CD4-positive, alpha-beta memory T cell (primary cell): ENCODE measurements at regions of chr11 and their contacts with region 1.

Region 1: GRCh38 chr11:72722050-72722748 is 30.0 kb downstream of the ARAP1 start:
- DNase-seq: peak; percentile 88 to 93 (median 91)
- H3K4me3 ChIP-seq: peak overlapping the region; percentile 82 to 98
- H3K4me3 Mint-ChIP-seq: peak overlapping the region; percentile 93 to 99 (median 96)
- H3K27ac ChIP-seq: peak overlapping the region; percentile 80
- H3K27ac Mint-ChIP-seq: peak overlapping the region; percentile 93 to 98 (median 96)
- H3K4me1 ChIP-seq: peaks cover 54% of the 10 kb centered on the region
- H3K4me1 Mint-ChIP-seq: peaks cover 46 to 78% (median 60%) of the 10 kb centered on the region in 4 donors
- H3K27me3 ChIP-seq: no peaks in the 10 kb centered on the region
- H3K27me3 Mint-ChIP-seq: peaks cover 0 to 1% of the 10 kb centered on the region in 2 donors

Region 2: DNA sequence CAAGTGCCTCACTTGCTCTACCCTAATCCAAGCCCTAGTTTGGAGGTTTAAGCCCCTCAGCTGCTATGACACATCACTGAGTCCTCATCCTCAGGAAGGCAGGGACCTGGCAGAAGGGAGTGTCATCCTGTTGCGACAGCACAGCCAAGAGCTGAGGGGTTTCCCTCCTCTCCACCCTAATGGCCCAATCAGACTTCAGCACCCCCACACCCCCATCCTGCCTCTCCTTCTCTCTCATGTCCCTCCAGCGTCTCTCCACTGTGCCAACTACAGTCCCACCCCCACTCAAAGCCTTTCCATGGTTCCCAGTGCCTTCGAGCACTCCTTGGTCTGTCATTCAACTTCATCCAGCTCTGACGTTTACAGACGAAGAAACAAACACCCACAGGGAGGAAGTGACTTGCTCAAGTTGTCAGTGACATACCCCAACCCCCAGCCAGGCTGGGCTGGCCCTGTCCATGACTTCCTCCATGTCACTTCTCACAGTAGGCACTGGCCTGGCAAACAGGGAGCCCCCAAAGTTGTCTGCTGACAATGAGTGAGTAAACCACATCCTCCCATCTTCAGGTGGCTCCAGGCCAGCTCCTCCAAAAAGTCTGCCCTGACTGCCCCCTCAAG is 14.4 kb after region 1 on chr11:
- CTCF ChIA-PET with region 1: interaction called, 13 read pairs
- POLR2A ChIA-PET with region 1: interaction called, 9 read pairs
- intact Hi-C with region 1: no loop called
- DNase-seq: peak; percentile 71 to 90 (median 78)
- H3K4me3 ChIP-seq: no peak overlapping the region
- H3K4me3 Mint-ChIP-seq: peak overlapping the region; percentile 6 to 74 (median 54)
- H3K27ac ChIP-seq: peak overlapping the region; percentile 54
- H3K27ac Mint-ChIP-seq: peak overlapping the region; percentile 89 to 100 (median 98)
- H3K4me1 ChIP-seq: peaks cover 59% of the 10 kb centered on the region
- H3K4me1 Mint-ChIP-seq: peaks cover 43 to 65% (median 54%) of the 10 kb centered on the region in 4 donors
- H3K27me3 ChIP-seq: no peaks in the 10 kb centered on the region
- H3K27me3 Mint-ChIP-seq: no peaks in the 10 kb centered on the region

Region 3: DNA sequence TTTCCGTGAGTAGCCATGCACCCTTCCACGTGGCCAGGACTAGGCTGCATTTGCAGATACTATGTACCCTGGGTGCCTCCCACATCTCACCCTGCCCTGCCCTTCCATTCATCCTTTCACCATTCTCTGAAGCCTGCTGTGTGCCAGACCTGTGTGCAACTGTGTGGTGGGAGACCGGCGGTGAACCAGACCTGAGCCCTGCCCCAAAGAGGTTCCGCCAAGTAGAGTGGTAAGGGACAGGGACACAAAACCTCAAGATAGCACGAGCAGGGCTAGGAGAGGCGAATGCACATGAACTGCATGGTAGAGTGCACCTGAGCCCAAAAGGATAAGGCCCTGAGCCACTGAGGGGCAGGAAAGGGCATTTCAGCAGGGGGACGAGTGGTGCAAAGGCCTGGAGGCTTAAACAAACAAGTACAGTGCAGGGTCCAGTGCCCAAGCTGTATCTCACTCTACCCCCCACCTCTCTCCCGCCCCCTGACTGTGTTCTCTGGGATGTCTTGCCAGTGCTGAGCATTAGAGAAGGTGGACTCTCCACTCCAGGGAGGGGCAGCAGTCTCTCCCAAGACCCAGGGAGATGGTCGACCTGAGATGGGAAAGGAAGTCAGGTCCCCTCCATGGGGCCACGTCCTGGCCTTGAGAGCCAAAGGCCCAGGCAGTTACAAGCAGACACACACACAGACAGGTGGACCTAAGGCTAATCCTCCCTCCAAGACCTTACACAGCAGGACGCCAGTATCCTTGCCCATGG is 44.1 kb after region 1 on chr11:
- CTCF ChIA-PET with region 1: interaction called, 10 read pairs
- POLR2A ChIA-PET with region 1: interaction called, 3 read pairs
- intact Hi-C with region 1: no loop called
- DNase-seq: no peak
- H3K4me3 ChIP-seq: no peak overlapping the region
- H3K4me3 Mint-ChIP-seq: no peak overlapping the region
- H3K27ac ChIP-seq: no peak overlapping the region
- H3K27ac Mint-ChIP-seq: peak overlapping the region in 2 of 7 donors; percentile 9 to 63
- H3K4me1 ChIP-seq: peaks cover 10% of the 10 kb centered on the region
- H3K4me1 Mint-ChIP-seq: peaks cover 8 to 19% (median 13%) of the 10 kb centered on the region in 4 donors
- H3K27me3 ChIP-seq: no peaks in the 10 kb centered on the region
- H3K27me3 Mint-ChIP-seq: no peaks in the 10 kb centered on the region

Region 4: GRCh38 chr11:72814286-72815109 is 92.3 kb after region 1 on chr11 and contains the start of gene ATG16L2:
- CTCF ChIA-PET with region 1: interaction called, 34 read pairs
- POLR2A ChIA-PET with region 1: interaction called, 46 read pairs
- intact Hi-C with region 1: loop called (anchors 1 kb)
- DNase-seq: peak; percentile 88 to 97 (median 92)
- H3K4me3 ChIP-seq: peak within 1 kb of the TSS; percentile 77 to 99
- H3K4me3 Mint-ChIP-seq: peak within 1 kb of the TSS; percentile 98 to 100 (median 98)
- H3K27ac ChIP-seq: peak within 1 kb of the TSS; percentile 97
- H3K27ac Mint-ChIP-seq: peak within 1 kb of the TSS; percentile 98 to 100 (median 99)
- H3K4me1 ChIP-seq: peaks cover 31% of the 10 kb centered on the region
- H3K4me1 Mint-ChIP-seq: peaks cover 31 to 67% (median 49%) of the 10 kb centered on the region in 4 donors
- H3K27me3 ChIP-seq: no peaks in the 10 kb centered on the region
- H3K27me3 Mint-ChIP-seq: no peaks in the 10 kb centered on the region
- total RNA-seq, gene ATG16L2: 194 to 202 TPM

Region 5: GRCh38 chr11:72848846-72849466 is 126.8 kb after region 1 on chr11:
- CTCF ChIA-PET with region 1: interaction called, 14 read pairs
- POLR2A ChIA-PET with region 1: no interaction called
- intact Hi-C with region 1: loop called (anchors 1 kb)
- DNase-seq: peak; percentile 42 to 57 (median 47)
- H3K4me3 ChIP-seq: no peak overlapping the region
- H3K4me3 Mint-ChIP-seq: no peak overlapping the region
- H3K27ac ChIP-seq: no peak overlapping the region
- H3K27ac Mint-ChIP-seq: peak overlapping the region in 2 of 7 donors; percentile 42 to 56
- H3K4me1 ChIP-seq: no peaks in the 10 kb centered on the region
- H3K4me1 Mint-ChIP-seq: peaks cover 7 to 14% (median 11%) of the 10 kb centered on the region in 4 donors
- H3K27me3 ChIP-seq: no peaks in the 10 kb centered on the region
- H3K27me3 Mint-ChIP-seq: no peaks in the 10 kb centered on the region

Region 6: GRCh38 chr11:72864702-72865655 is 142.8 kb after region 1 on chr11:
- CTCF ChIA-PET with region 1: no interaction called
- POLR2A ChIA-PET with region 1: no interaction called
- intact Hi-C with region 1: no loop called
- DNase-seq: no peak
- H3K4me3 ChIP-seq: no peak overlapping the region
- H3K4me3 Mint-ChIP-seq: no peak overlapping the region
- H3K27ac ChIP-seq: no peak overlapping the region
- H3K27ac Mint-ChIP-seq: peak overlapping the region in 1 of 7 donors; percentile 17
- H3K4me1 ChIP-seq: peaks cover 9% of the 10 kb centered on the region
- H3K4me1 Mint-ChIP-seq: peaks cover 10 to 11% (median 11%) of the 10 kb centered on the region in 4 donors
- H3K27me3 ChIP-seq: no peaks in the 10 kb centered on the region
- H3K27me3 Mint-ChIP-seq: no peaks in the 10 kb centered on the region

Region 7: GRCh38 chr11:73177778-73178577 is 455.8 kb after region 1 on chr11:
- CTCF ChIA-PET with region 1: interaction called, 49 read pairs
- POLR2A ChIA-PET with region 1: interaction called, 10 read pairs
- intact Hi-C with region 1: loop called (anchors 1 kb)
- DNase-seq: peak; percentile 71 to 77 (median 73)
- H3K4me3 ChIP-seq: no peak overlapping the region
- H3K4me3 Mint-ChIP-seq: no peak overlapping the region
- H3K27ac ChIP-seq: no peak overlapping the region
- H3K27ac Mint-ChIP-seq: peak overlapping the region in 2 of 7 donors; percentile 35 to 43
- H3K4me1 ChIP-seq: peaks cover 10% of the 10 kb centered on the region
- H3K4me1 Mint-ChIP-seq: peaks cover 0 to 9% (median 3%) of the 10 kb centered on the region in 4 donors
- H3K27me3 ChIP-seq: no peaks in the 10 kb centered on the region
- H3K27me3 Mint-ChIP-seq: peaks cover 0 to 3% of the 10 kb centered on the region in 2 donors